Naive thymus-derived CD4-positive, alpha-beta T cell (primary cell): ENCODE measurements at regions of chr1 and their contacts with region 1.

Region 1: GRCh38 chr1:155688324-155689080 is at the start of gene YY1AP1:
- DNase-seq: peak; percentile 87 to 96 (median 92)
- ATAC-seq: peak; percentile 96
- H3K4me3 ChIP-seq: peak within 1 kb of the TSS; percentile 99
- H3K4me3 Mint-ChIP-seq: peak within 1 kb of the TSS; percentile 93 to 98 (median 96)
- H3K27ac ChIP-seq: peak within 1 kb of the TSS; percentile 91
- H3K27ac Mint-ChIP-seq: peak within 1 kb of the TSS; percentile 90 to 98 (median 96)
- H3K4me1 ChIP-seq: peaks cover 15 to 30% of the 10 kb centered on the region in 2 donors
- H3K4me1 Mint-ChIP-seq: peaks cover 37 to 81% (median 70%) of the 10 kb centered on the region in 7 donors
- H3K27me3 ChIP-seq: no peaks in the 10 kb centered on the region
- H3K27me3 Mint-ChIP-seq: no peaks in the 10 kb centered on the region
- total RNA-seq, gene YY1AP1: 81.2 to 130 (median 88.2) TPM

Region 2: DNA sequence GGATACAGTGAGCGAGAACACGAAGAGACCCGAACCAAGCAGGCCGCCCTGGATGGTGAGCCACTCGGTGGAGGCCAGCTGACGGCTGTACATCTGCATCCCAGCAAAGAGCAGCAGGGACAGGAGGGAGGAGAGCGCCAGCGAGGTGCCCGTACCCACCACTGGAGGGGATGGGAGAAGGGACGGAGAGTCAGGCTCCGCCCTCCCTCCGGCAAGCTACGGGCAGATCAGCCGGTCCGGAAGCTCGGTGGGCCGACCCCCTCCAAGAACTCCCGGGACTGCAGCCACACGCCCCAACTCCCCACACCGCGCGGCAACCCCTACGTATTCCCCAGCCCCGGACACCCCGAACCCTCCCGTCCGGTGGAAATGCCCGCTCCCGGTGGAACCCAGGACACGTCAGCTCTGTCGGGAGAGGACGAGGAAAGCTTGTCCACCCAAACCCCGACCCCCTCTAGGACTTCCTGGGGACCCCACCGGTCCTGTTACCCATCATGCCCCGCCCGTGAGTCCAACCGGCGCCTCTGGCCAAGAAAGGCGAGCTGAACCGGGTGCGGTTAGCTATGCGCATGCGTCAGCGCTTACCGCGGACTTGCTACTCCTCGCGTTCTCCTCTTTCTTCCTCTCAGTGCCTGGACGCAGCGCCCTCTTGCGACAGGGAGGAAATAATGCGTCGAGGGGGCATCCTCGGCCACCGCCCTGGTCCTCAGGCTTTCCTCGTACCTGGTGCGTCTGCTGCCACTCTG is 515.6 kb before region 1 on chr1 and contains the start of gene KRTCAP2:
- CTCF ChIA-PET with region 1: no interaction called
- POLR2A ChIA-PET with region 1: no interaction called
- intact Hi-C with region 1: no loop called
- DNase-seq: peak; percentile 89 to 93 (median 92)
- ATAC-seq: peak; percentile 91
- H3K4me3 ChIP-seq: peak within 1 kb of the TSS; percentile 90
- H3K4me3 Mint-ChIP-seq: peak within 1 kb of the TSS; percentile 94 to 100 (median 98)
- H3K27ac ChIP-seq: peak within 1 kb of the TSS; percentile 88
- H3K27ac Mint-ChIP-seq: peak within 1 kb of the TSS; percentile 95 to 99 (median 98)
- H3K4me1 ChIP-seq: peaks cover 11 to 18% of the 10 kb centered on the region in 2 donors
- H3K4me1 Mint-ChIP-seq: peaks cover 32 to 60% (median 47%) of the 10 kb centered on the region in 7 donors
- H3K27me3 ChIP-seq: no peaks in the 10 kb centered on the region
- H3K27me3 Mint-ChIP-seq: peaks cover 0 to 6% (median 0%) of the 10 kb centered on the region in 5 donors
- total RNA-seq, gene KRTCAP2: 97.4 to 236 (median 155) TPM

Region 3: GRCh38 chr1:155636397-155637153 is 51.9 kb before region 1 on chr1:
- CTCF ChIA-PET with region 1: no interaction called
- POLR2A ChIA-PET with region 1: no interaction called
- intact Hi-C with region 1: loop called in 1 of 2 experiments (anchors 10 kb)
- DNase-seq: no peak
- ATAC-seq: no peak
- H3K4me3 ChIP-seq: peak overlapping the region; percentile 57
- H3K4me3 Mint-ChIP-seq: peak overlapping the region; percentile 83 to 100 (median 96)
- H3K27ac ChIP-seq: peak overlapping the region; percentile 66
- H3K27ac Mint-ChIP-seq: peak overlapping the region; percentile 90 to 97 (median 95)
- H3K4me1 ChIP-seq: peaks cover 6 to 16% of the 10 kb centered on the region in 2 donors
- H3K4me1 Mint-ChIP-seq: peaks cover 6 to 25% (median 23%) of the 10 kb centered on the region in 7 donors
- H3K27me3 ChIP-seq: no peaks in the 10 kb centered on the region
- H3K27me3 Mint-ChIP-seq: peaks cover 0 to under 1% (median 0%) of the 10 kb centered on the region in 5 donors

Region 4: DNA sequence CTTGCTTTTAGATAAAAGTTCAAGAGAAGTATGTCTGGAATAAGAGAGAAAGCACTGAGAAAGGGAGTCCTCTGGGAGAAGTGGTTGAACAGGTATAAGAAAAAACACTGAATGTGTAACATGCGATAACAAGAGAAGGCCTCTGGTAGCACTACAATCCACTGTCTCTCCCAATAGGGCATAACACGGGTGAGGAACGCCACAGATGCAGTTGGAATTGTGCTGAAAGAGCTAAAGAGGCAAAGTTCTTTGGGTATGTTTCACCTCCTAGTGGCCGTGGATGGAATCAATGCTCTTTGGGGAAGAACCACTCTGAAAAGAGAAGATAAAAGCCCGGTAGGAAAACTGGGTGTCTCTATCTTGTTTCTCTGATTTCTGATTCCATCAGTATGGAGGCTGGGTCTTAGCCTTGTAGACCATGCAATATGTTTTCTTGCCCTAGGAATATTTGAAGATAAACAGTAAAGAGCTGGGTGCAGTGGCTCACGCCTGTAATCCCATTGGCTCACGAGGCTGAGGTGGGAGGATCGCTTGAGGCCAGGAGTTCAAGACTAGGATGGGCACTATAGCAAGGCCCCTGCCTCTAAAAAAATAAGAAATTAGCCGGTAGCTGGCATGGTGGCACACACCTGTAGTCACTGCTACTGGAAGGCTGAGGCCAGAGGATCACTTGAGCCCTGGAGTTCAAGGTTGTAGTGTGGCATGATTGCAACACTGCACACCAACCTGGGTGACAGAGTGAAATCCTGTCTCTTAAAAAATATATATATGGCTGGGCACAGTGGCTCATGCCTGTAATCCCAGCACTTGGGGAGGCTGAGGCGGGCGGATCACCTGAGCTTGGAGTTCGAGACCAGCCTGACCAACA is 40.8 kb after region 1 on chr1:
- CTCF ChIA-PET with region 1: no interaction called
- POLR2A ChIA-PET with region 1: no interaction called
- intact Hi-C with region 1: loop called (anchors 1 to 5 kb)
- DNase-seq: peak in 6 of 9 donors; percentile 7 to 43 (median 28)
- ATAC-seq: peak; percentile 57
- H3K4me3 ChIP-seq: no peak overlapping the region
- H3K4me3 Mint-ChIP-seq: no peak overlapping the region
- H3K27ac ChIP-seq: no peak overlapping the region
- H3K27ac Mint-ChIP-seq: peak overlapping the region in 5 of 9 donors; percentile 10 to 67 (median 29)
- H3K4me1 ChIP-seq: no peaks in the 10 kb centered on the region
- H3K4me1 Mint-ChIP-seq: peaks cover 0 to 7% (median 0%) of the 10 kb centered on the region in 7 donors
- H3K27me3 ChIP-seq: no peaks in the 10 kb centered on the region
- H3K27me3 Mint-ChIP-seq: no peaks in the 10 kb centered on the region

Region 5: GRCh38 chr1:155744711-155745283 is 56.3 kb after region 1 on chr1:
- CTCF ChIA-PET with region 1: no interaction called
- POLR2A ChIA-PET with region 1: no interaction called
- intact Hi-C with region 1: loop called (anchors 1 to 2 kb)
- DNase-seq: no peak
- ATAC-seq: no peak
- H3K4me3 ChIP-seq: peak overlapping the region; percentile 80
- H3K4me3 Mint-ChIP-seq: peak overlapping the region; percentile 89 to 98 (median 95)
- H3K27ac ChIP-seq: peak overlapping the region; percentile 78
- H3K27ac Mint-ChIP-seq: peak overlapping the region; percentile 90 to 97 (median 92)
- H3K4me1 ChIP-seq: peaks cover 6 to 7% of the 10 kb centered on the region in 2 donors
- H3K4me1 Mint-ChIP-seq: peaks cover 4 to 12% (median 8%) of the 10 kb centered on the region in 7 donors
- H3K27me3 ChIP-seq: no peaks in the 10 kb centered on the region
- H3K27me3 Mint-ChIP-seq: no peaks in the 10 kb centered on the region